ENCODE measurements at regions of chr7 and their contacts with region 1.

Region 1: GRCh38 chr7:116173051-116174028 is 37.0 kb upstream of the TES start:
- DNase-seq: peak; percentile 69
- ATAC-seq: peak; percentile 31
- H3K4me3 ChIP-seq: no peak overlapping the region
- H3K27ac ChIP-seq: no peak overlapping the region
- H3K4me1 ChIP-seq: peaks cover 15% of the 10 kb centered on the region
- H3K27me3 ChIP-seq: no peaks in the 10 kb centered on the region
- CTCF ChIP-seq: peak; percentile 71
- POLR2A ChIP-seq: no peak
- RAD21 ChIP-seq: peak; percentile 87

Region 2: DNA sequence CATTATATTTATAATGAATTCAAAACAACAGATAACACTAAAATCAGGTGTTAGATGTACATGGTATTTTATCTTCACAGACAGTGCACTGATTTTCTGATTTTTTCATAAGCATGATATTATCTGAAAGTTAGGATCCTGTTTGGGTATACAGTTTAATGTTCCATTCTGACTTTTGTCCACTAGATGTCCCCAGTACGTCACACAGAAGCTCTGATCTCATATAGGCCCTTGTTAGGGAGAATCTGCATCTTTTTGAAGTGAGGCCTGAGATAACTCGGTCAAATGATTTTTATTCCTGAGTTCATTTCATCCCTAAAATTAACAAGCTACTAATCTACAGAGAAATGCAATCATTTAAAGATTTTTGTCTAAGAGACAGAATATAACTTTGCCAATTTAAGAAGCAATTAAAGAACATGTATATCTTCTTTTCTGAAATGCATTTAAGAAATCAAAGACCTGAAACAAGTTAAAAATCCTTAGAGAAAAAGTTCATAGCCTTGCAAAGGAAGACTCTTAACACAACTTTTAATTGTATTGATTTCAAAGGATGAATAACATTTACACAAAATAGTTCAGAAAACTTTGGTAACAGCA is 35.0 kb before region 1 on chr7:
- CTCF ChIA-PET with region 1: interaction called, 5 read pairs
- POLR2A ChIA-PET with region 1: no interaction called
- dilution Hi-C with region 1: no loop called
- in situ Hi-C with region 1: no loop called
- intact Hi-C with region 1: loop called (anchors 1 kb)
- DNase-seq: peak; percentile 83
- ATAC-seq: peak; percentile 90
- H3K4me3 ChIP-seq: no peak overlapping the region
- H3K27ac ChIP-seq: no peak overlapping the region
- H3K4me1 ChIP-seq: peaks cover 9% of the 10 kb centered on the region
- H3K27me3 ChIP-seq: no peaks in the 10 kb centered on the region
- CTCF ChIP-seq: peak; percentile 88
- POLR2A ChIP-seq: no peak
- RAD21 ChIP-seq: peak; percentile 84

Region 3: DNA sequence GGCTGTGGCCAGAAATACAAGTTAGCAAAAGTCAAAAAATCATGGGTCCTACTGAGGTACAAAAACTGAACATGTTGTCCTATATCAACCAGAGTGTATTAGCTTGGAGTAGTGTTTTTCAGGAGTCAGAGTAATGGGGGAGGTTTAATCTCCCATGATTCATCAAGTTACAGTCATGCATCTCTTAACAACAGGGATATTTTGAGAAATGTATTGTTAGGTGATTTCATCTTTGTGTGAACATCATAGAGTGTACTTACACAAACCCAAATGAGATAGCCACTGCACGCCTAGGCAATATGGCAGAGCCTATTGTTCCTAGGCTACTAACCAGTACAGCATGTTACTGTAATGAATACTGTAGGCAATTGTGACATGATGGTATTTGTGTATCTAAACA is 22.1 kb after region 1 on chr7:
- CTCF ChIA-PET with region 1: no interaction called
- POLR2A ChIA-PET with region 1: no interaction called
- dilution Hi-C with region 1: no loop called
- in situ Hi-C with region 1: no loop called
- intact Hi-C with region 1: no loop called
- DNase-seq: peak; percentile 73
- ATAC-seq: peak; percentile 36
- H3K4me3 ChIP-seq: no peak overlapping the region
- H3K27ac ChIP-seq: no peak overlapping the region
- H3K4me1 ChIP-seq: peaks cover 3% of the 10 kb centered on the region
- H3K27me3 ChIP-seq: no peaks in the 10 kb centered on the region
- CTCF ChIP-seq: no peak
- POLR2A ChIP-seq: no peak
- RAD21 ChIP-seq: no peak